Astrocyte of the cerebellum (primary cell): ENCODE measurements at regions of chr6 and their contacts with region 1.

Region 1: DNA sequence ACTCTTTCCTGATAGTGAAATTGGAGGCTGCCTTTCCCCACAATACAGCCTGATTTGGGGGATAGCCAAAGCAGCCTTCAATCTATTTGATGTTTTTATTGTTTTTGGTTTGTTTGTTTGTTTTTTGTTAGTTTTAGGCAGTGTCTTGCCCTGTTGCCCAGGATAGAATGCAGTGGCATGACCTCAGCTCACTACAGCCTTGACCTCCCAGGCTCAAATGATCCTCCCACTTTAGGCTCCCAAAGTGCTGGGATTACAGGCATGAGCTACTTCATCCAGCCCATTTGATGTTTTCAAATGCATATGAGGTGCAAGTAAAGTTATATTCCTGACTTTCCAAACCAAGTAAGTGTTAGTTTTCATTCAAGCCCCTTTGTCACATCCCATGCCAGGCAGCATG is 41.3 kb upstream of the SEC63 start:
- DNase-seq: no peak
- H3K4me3 ChIP-seq: no peak overlapping the region
- CTCF ChIP-seq: no peak

Region 2: DNA sequence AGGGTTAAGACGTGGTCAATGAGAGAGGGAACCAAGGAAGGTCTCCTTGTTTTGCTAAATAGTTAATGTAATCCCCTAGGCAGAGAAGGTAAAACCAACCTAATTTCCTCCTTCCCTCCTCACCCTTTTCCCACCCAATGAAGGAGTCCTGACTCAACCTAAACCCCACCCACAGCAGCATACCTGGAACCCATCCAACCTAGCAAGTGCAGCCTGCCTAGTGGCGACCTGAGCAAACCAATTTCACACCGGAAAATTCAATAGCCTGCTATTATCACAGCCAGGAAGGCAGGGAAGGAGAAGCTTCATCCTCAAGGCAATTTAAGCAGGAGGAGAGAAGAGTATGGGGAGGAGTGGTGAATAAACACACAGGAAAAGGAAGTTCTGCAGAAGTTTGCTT is 28.3 kb after region 1 on chr6:
- in situ Hi-C with region 1: no loop called
- DNase-seq: no peak
- H3K4me3 ChIP-seq: no peak overlapping the region
- CTCF ChIP-seq: no peak

Region 3: GRCh38 chr6:108039681-108040080 is 40.3 kb after region 1 on chr6:
- in situ Hi-C with region 1: no loop called
- DNase-seq: no peak
- H3K4me3 ChIP-seq: no peak overlapping the region
- CTCF ChIP-seq: no peak

Region 4: DNA sequence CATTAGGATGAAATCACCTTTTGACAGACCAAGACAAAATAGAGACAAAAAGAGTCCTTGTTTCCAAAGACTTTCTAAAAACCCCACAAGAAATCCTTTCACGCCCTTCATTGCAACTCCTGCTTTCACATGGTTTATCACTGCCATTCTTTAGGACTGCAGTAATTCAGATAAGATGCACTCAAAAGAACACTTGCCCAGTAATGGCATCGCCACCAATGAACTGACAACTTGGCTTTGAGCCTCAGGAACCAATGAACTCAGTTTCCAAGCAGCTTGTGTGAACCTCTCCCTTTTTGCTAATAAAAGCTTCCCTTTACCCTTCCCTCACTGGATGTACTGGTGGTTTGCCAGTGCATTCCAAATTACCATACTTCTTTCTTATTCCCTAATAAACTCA is 53.4 kb after region 1 on chr6:
- in situ Hi-C with region 1: loop called (anchors 5 kb)
- DNase-seq: no peak
- H3K4me3 ChIP-seq: no peak overlapping the region
- CTCF ChIP-seq: no peak